PC-3 (cell line): ENCODE measurements at regions of chr13 and their contacts with region 1.

Region 1: GRCh38 chr13:23321535-23322241 is 111.8 kb downstream of the SACS start:
- DNase-seq: peak; percentile 93
- ATAC-seq: peak; percentile 90
- H3K4me3 ChIP-seq: peak overlapping the region; percentile 59
- H3K27ac ChIP-seq: peak overlapping the region; percentile 96
- H3K4me1 ChIP-seq: peaks cover 48% of the 10 kb centered on the region
- H3K27me3 ChIP-seq: no peaks in the 10 kb centered on the region
- CTCF ChIP-seq: no peak

Region 2: GRCh38 chr13:22801402-22802003 is 520.2 kb before region 1 on chr13:
- CTCF ChIA-PET with region 1: interaction called, 8 read pairs
- POLR2A ChIA-PET with region 1: no interaction called
- intact Hi-C with region 1: loop called (anchors 1 kb)
- DNase-seq: no peak
- ATAC-seq: no peak
- H3K4me3 ChIP-seq: no peak overlapping the region
- H3K27ac ChIP-seq: no peak overlapping the region
- H3K4me1 ChIP-seq: no peaks in the 10 kb centered on the region
- H3K27me3 ChIP-seq: peaks cover 26% of the 10 kb centered on the region; the same call in 1 of the 2 replicates
- CTCF ChIP-seq: peak; percentile 38; the same call in 1 of the 2 replicates

Region 3: DNA sequence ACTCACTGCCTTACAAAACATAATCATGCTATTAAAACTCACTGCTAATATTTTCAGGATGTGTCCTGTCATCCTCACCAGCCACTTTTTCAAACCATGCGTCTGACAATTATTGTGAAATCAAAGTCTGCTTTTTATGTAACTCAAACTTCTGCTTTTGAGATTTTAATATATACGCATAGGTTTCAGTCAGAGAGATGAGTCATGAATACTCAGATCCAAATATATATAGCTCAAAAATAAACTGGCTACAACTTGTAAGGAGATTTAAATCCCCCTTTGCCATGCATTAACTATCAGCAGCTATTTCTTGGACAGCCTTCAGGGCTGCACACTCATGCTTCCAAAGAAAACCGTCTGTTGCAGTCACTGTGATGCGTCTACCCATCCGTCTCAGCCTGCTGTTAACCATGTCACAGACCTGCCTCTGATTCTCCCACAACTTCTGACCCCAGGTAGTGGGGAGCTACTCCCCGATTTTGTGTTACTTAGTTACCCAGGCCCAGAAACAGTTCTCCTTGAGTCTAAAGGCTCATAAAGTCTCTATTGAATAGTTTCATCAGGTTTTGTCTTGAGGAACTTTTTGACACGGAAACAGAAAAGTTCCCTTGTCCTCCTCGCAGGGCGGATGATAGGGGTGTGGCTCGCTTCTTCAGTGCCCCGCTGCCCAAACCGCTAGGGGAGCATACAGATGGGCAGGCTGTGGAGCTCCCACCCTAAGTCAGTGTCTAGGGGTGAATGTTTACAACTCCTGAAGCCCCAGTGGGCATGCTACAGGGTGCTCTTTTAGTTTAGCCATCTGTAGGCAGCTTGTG is 174.7 kb before region 1 on chr13:
- CTCF ChIA-PET with region 1: no interaction called
- POLR2A ChIA-PET with region 1: no interaction called
- intact Hi-C with region 1: no loop called
- DNase-seq: no peak
- ATAC-seq: no peak
- H3K4me3 ChIP-seq: no peak overlapping the region
- H3K27ac ChIP-seq: no peak overlapping the region
- H3K4me1 ChIP-seq: no peaks in the 10 kb centered on the region
- H3K27me3 ChIP-seq: peaks cover 22% of the 10 kb centered on the region
- CTCF ChIP-seq: no peak

Region 4: GRCh38 chr13:23175920-23176319 is 145.8 kb before region 1 on chr13:
- CTCF ChIA-PET with region 1: no interaction called
- POLR2A ChIA-PET with region 1: no interaction called
- intact Hi-C with region 1: loop called (anchors 2 kb)
- DNase-seq: peak; percentile 29
- ATAC-seq: no peak
- H3K4me3 ChIP-seq: no peak overlapping the region
- H3K27ac ChIP-seq: no peak overlapping the region
- H3K4me1 ChIP-seq: no peaks in the 10 kb centered on the region
- H3K27me3 ChIP-seq: peaks cover 69% of the 10 kb centered on the region
- CTCF ChIP-seq: peak; percentile 59

Region 5: GRCh38 chr13:23375001-23375971 is 53.6 kb after region 1 on chr13:
- CTCF ChIA-PET with region 1: interaction called, 3 read pairs
- POLR2A ChIA-PET with region 1: no interaction called
- intact Hi-C with region 1: loop called (anchors 2 kb)
- DNase-seq: peak; percentile 87
- ATAC-seq: peak; percentile 91
- H3K4me3 ChIP-seq: peak overlapping the region; percentile 90
- H3K27ac ChIP-seq: peak overlapping the region; percentile 24; the same call in 1 of the 2 replicates
- H3K4me1 ChIP-seq: peaks cover 41% of the 10 kb centered on the region
- H3K27me3 ChIP-seq: no peaks in the 10 kb centered on the region
- CTCF ChIP-seq: no peak